ENCODE measurements at regions of chr19 and their contacts with region 1.

Region 1: DNA sequence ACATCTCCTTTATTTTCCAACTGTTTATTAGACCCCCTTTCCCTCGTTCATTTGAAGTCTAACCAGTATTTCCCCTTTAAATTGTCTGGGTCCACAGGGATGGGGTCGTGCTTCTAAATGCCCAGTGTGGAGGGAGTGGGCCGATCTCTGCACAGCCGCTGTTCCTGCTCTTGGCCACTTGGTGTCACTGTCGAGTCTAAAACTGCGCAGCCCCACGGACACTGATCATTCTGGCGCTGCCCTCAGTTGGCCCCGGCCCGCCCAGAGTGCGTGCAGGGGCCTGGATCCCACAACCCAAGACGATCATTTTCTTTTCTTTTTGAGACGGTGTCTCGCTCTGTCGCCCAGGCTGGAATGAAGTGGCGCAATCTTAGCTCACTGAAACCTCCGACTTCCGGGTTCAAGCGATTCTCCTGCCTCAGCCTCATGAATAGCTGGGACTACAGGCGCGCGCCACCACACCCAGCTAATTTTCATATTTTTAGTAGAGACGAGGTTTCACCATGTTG is 12.0 kb downstream of the WDR88 start:
- H3K4me3 ChIP-seq: no peak overlapping the region
- H3K27ac ChIP-seq: no peak overlapping the region
- H3K4me1 ChIP-seq: peaks cover 3% of the 10 kb centered on the region; the same call in 1 of the 2 replicates
- CTCF ChIP-seq: peak; percentile 99

Region 2: DNA sequence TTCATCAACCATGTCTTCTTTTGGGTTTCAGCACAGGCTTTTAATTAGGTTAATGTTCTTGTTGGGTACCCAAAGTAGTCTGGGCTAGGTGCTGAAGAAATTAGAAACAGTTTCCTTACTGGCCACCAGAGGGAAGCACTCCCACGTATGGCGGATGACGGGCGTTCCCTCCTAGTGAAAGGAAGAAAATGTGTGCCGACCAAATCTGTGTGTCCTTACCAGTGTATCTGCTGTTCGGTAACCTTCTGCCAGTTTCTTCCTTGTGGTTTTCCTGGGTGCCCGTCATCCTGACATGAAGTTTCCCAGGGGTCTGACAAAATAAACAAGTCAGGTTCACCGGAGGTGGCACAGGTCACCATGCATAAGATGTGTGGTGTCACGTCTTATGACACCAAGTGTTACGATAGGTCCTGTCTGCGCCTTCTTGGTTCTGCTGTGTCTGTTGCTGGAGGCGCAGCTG is 18.0 kb before region 1 on chr19:
- CTCF ChIA-PET with region 1: interaction called, 29 read pairs
- POLR2A ChIA-PET with region 1: no interaction called
- H3K4me3 ChIP-seq: no peak overlapping the region
- H3K27ac ChIP-seq: 0 out of 2 replicates have a peak overlapping the region, but pooled peaks have one; percentile 11
- H3K4me1 ChIP-seq: peaks cover 4% of the 10 kb centered on the region
- CTCF ChIP-seq: peak; percentile 86

Region 3: DNA sequence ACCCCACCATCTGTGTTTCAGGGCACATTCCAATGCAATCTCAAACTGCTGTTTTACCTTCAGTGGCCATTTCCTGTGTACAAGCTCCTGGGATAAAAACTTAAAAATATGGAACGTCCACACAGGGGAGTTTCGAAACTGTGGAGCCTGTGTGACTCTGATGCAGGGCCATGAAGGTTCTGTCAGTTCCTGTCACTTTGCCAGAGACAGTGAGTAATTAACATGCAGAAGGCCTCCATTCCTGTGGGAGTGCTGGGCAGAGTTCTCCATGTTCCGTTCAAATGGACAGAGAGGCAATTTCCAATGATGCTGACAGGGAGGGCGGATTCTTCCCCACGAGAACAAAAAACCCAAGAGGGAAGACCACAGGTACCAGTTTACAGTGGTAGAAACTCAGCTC is 12.4 kb after region 1 on chr19:
- CTCF ChIA-PET with region 1: interaction called, 31 read pairs
- POLR2A ChIA-PET with region 1: interaction called, 4 read pairs
- H3K4me3 ChIP-seq: no peak overlapping the region
- H3K27ac ChIP-seq: no peak overlapping the region
- H3K4me1 ChIP-seq: no peaks in the 10 kb centered on the region
- CTCF ChIP-seq: no peak

Region 4: GRCh38 chr19:33163481-33163880 is 19.5 kb after region 1 on chr19:
- CTCF ChIA-PET with region 1: interaction called, 31 read pairs
- POLR2A ChIA-PET with region 1: interaction called, 7 read pairs
- H3K4me3 ChIP-seq: no peak overlapping the region
- H3K27ac ChIP-seq: no peak overlapping the region
- H3K4me1 ChIP-seq: peaks cover 9% of the 10 kb centered on the region
- CTCF ChIP-seq: no peak

Region 5: DNA sequence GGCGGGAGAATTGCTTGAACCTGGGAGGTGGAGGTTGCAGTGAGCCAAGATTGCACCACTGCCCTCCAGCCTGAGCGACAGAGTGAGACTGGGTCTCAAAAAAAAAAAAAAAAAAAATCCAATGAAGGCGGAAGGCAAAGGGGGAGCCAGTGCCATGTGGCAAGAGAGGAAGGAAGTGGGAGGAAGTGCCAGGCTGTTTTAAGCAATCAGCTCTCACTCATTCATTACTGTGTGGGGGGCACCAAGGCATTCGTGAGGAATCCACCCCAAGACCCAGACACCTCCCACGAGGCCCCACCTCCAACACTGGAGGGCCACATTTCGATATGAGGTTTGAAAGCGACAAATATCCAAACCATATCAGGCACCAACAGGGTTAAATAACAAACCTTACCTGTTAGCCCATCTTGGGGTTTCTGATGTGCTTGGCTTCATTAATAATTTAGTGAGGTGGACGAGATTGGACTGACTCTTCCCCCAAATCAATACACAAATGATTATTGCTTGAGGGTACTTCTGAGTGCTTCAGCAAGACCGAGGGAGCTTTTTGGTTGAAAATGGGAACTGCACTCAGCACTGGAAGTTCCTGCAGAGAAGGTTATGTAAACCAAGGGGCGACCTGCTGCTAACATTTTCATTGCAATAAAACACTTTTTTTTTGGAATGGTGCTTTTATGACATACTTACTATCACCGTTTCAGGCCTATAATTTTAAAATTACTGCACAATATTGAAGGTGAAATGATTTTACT is 42.7 kb after region 1 on chr19:
- CTCF ChIA-PET with region 1: interaction called, 152 read pairs
- POLR2A ChIA-PET with region 1: interaction called, 6 read pairs
- H3K4me3 ChIP-seq: no peak overlapping the region
- H3K27ac ChIP-seq: no peak overlapping the region
- H3K4me1 ChIP-seq: peaks cover 5% of the 10 kb centered on the region; the same call in 1 of the 2 replicates
- CTCF ChIP-seq: no peak

Region 6: DNA sequence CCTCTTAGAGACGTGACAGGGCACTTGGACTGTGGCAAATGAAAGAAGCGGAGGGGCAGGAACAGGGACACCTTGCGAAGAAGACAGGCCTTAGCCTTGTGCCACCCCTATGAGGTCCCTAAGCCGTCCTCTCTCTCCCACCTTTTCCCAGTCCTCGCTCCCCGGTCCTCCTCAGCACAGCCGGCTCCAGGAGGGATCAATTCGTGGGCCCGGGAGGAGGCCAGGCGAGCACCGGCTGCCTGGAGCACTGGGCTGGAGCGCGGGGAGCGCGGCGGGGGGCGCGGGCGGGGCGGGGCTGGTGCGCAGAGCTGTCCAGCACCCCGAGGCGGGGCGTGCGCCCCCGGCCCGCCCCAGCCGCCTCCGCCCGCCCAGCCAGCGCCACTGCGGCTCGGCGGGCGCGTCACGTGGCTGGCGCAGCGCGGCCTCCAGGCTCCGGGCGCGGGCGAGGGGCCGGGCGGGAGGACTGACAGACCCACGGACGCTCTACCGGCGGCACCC is 50.0 kb after region 1 on chr19 and contains the start of gene LRP3:
- CTCF ChIA-PET with region 1: interaction called, 10 read pairs
- POLR2A ChIA-PET with region 1: no interaction called
- H3K4me3 ChIP-seq: peak within 1 kb of the TSS; percentile 47
- H3K27ac ChIP-seq: peak within 1 kb of the TSS; percentile 95
- H3K4me1 ChIP-seq: peaks cover 15% of the 10 kb centered on the region
- CTCF ChIP-seq: no peak

Region 7: GRCh38 chr19:33221638-33222037 is 77.7 kb after region 1 on chr19:
- CTCF ChIA-PET with region 1: interaction called, 11 read pairs
- POLR2A ChIA-PET with region 1: no interaction called
- H3K4me3 ChIP-seq: no peak overlapping the region
- H3K27ac ChIP-seq: no peak overlapping the region
- H3K4me1 ChIP-seq: peaks cover 2% of the 10 kb centered on the region; the same call in 1 of the 2 replicates
- CTCF ChIP-seq: no peak